MCF 10A (cell line): ENCODE measurements at regions of chr2 and their contacts with region 1.

Region 1: DNA sequence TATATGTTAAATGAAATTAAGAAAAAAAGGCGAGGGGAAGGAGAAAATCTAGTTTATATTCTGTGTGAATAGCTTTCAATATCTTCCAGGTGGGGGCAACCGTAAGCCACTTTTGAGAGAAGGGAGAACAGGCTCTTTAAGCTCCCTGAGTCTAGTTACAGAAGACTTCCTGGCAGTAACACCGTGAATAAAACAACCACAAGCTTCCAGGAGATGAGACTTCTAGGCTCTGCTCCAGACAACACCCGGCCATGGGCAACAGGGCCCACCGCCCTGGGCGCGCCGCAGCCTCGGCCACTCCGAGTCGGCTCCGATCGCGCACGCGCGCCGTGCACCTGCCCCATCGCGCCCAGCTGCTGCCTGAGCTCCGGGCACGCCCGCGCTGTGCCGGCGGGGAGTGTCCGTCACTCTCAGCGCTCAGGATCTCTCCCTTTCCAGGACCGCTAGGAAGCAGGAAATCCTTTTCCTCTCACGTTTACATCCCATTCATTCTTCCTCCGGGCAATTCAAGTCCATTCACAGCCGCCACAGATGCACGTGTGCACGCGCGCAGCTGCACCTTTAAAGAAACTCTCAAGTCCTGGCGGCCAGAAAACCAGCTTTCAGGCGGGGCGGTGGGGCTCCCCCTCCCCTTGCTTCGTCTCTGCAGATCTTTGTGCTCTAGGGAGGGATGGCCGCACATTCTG is 19.4 kb upstream of the PAX3 start:
- DNase-seq: peak; percentile 84
- H3K4me3 Mint-ChIP-seq: peak overlapping the region; percentile 89
- H3K27ac Mint-ChIP-seq: peak overlapping the region; percentile 89
- H3K4me1 Mint-ChIP-seq: no peaks in the 10 kb centered on the region
- H3K27me3 Mint-ChIP-seq: peaks cover 19% of the 10 kb centered on the region
- CTCF ChIP-seq: peak; percentile 63

Region 2: DNA sequence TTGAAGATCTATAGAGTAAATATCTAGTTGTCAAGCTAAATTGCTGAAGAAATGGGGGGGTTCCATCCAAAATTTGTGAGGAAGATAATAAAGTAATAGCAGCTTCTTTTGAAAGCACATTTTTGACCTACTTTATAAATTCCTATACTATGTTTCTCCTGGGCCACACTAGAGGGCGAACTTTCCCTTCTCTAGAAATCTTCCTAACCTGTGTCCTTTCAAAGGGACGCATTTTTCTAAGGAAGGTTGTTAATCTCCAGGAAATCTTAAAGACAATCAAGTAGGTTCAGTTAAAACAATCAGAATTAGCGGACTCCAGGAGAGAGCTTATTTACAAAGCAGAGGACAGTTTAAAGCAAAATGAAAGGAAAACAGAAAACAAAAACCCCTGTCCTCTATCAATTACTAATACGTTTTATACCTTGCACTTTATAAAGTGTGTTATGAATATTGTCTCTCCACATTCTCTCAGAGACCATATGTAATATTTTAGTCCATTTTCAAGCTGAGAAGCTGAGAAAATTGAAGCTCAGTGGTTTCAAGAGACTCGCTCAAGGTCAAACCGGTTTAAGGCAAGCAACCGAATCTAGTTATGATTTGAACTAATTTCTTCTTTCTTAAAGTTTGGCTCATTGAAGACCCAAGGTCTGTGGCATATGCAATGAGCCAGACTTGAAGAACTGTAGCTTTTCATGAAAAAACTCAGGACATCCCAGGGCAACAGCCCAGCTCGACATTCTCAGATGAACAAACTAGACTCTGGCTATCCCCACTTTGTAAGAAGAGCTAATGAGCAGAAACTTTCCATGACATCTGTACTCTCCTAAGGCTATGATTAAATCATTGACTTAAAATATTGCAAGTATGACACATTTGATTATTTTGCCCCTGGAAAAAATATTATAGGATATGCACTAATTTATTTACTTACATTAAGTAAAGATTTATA is 293.0 kb before region 1 on chr2:
- CTCF ChIA-PET with region 1: interaction called, 15 read pairs
- POLR2A ChIA-PET with region 1: interaction called, 7 read pairs
- intact Hi-C with region 1: loop called (anchors 1 kb)
- DNase-seq: peak; percentile 66
- H3K4me3 Mint-ChIP-seq: no peak overlapping the region
- H3K27ac Mint-ChIP-seq: no peak overlapping the region
- H3K4me1 Mint-ChIP-seq: no peaks in the 10 kb centered on the region
- H3K27me3 Mint-ChIP-seq: peaks cover 9% of the 10 kb centered on the region
- CTCF ChIP-seq: peak; percentile 69

Region 3: DNA sequence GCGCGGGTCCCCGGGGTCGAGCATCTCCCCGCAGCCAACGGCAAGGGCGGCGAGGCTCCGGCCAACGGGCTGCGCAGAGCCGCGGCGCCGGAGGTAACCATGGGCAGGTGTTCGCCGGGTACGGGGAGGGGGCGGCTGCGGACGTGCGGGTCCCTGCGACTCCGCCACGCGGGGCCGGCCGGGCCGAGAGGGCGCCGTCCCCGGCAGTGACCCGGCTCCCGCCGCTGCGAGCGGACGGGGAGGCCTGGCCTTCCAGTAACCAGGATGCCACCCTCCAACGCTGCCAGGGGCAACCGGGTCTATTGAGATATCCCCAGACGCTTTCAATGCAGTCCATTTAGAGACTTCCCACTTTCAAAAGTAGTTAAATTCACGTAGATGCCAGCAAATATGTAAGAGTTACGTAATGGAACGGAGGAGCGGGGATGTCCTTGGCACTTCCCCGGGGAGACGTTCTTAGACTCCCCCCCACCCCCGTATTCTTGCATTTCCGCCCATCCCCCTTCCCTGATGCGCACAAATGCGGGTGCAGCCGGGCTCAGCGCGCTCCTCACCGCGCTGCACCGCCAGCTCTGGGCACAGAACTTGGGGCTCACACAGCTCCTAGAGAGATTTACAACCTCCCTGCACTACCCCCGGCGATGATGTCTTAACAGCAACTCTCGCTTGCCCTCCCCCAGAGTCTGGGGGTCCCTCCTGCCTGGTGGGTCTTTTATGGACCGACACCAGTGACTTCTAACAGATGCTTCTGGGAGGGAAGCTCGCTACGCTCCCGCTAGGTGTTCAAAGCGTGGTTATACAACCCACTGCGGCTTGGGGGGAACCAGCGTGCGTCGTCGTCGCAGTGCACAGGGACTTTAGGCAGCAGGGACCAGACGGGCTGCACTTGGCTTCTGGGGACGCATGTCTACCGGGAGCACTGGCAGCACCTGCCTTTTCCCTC is 106.8 kb after region 1 on chr2:
- CTCF ChIA-PET with region 1: interaction called, 3 read pairs
- POLR2A ChIA-PET with region 1: interaction called, 13 read pairs
- intact Hi-C with region 1: loop called (anchors 1 kb)
- DNase-seq: peak; percentile 21
- H3K4me3 Mint-ChIP-seq: peak overlapping the region; percentile 82
- H3K27ac Mint-ChIP-seq: no peak overlapping the region
- H3K4me1 Mint-ChIP-seq: peaks cover 33% of the 10 kb centered on the region
- H3K27me3 Mint-ChIP-seq: no peaks in the 10 kb centered on the region
- CTCF ChIP-seq: no peak

Region 4: GRCh38 chr2:222440673-222441422 is 122.7 kb after region 1 on chr2:
- CTCF ChIA-PET with region 1: no interaction called
- POLR2A ChIA-PET with region 1: no interaction called
- intact Hi-C with region 1: no loop called
- DNase-seq: peak; percentile 71
- H3K4me3 Mint-ChIP-seq: peak overlapping the region; percentile 15
- H3K27ac Mint-ChIP-seq: peak overlapping the region; percentile 75
- H3K4me1 Mint-ChIP-seq: peaks cover 44% of the 10 kb centered on the region
- H3K27me3 Mint-ChIP-seq: no peaks in the 10 kb centered on the region
- CTCF ChIP-seq: no peak

Region 5: DNA sequence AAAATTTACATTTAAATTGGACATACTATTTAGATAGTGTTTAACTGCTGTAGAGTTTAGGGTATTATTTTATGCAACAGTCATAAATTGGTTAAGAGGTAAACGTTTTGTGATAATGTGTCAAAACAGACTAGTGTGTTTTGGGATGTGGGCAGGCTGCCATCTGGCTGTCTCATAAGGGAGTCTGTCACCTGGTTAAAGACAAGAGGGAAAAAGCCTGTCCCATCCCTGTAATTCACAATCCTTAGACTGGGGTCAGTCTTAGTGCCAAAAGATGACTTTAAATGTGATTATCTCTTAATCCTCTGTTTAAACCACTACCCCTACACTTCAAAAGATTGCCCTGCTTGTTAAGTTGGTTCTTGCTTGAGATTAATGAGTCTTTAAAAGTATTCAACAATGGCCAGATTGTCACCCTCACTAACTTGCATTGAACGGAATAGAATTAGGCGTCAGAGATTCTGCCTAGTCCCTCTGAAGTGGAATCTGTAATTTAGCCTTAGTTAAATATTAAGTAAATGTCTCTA is 165.4 kb after region 1 on chr2:
- CTCF ChIA-PET with region 1: interaction called, 12 read pairs
- POLR2A ChIA-PET with region 1: interaction called, 3 read pairs
- intact Hi-C with region 1: loop called (anchors 1 kb)
- DNase-seq: peak; percentile 35
- H3K4me3 Mint-ChIP-seq: no peak overlapping the region
- H3K27ac Mint-ChIP-seq: no peak overlapping the region
- H3K4me1 Mint-ChIP-seq: peaks cover 22% of the 10 kb centered on the region
- H3K27me3 Mint-ChIP-seq: no peaks in the 10 kb centered on the region
- CTCF ChIP-seq: no peak

Region 6: GRCh38 chr2:222554517-222554916 is 236.3 kb after region 1 on chr2:
- CTCF ChIA-PET with region 1: interaction called, 11 read pairs
- POLR2A ChIA-PET with region 1: interaction called, 3 read pairs
- intact Hi-C with region 1: no loop called
- DNase-seq: no peak
- H3K4me3 Mint-ChIP-seq: no peak overlapping the region
- H3K27ac Mint-ChIP-seq: no peak overlapping the region
- H3K4me1 Mint-ChIP-seq: peaks cover 4% of the 10 kb centered on the region
- H3K27me3 Mint-ChIP-seq: no peaks in the 10 kb centered on the region
- CTCF ChIP-seq: no peak

Region 7: GRCh38 chr2:222568865-222569264 is 250.7 kb after region 1 on chr2:
- CTCF ChIA-PET with region 1: interaction called, 33 read pairs
- POLR2A ChIA-PET with region 1: interaction called, 11 read pairs
- intact Hi-C with region 1: no loop called
- DNase-seq: peak; percentile 70
- H3K4me3 Mint-ChIP-seq: no peak overlapping the region
- H3K27ac Mint-ChIP-seq: no peak overlapping the region
- H3K4me1 Mint-ChIP-seq: peaks cover 19% of the 10 kb centered on the region
- H3K27me3 Mint-ChIP-seq: no peaks in the 10 kb centered on the region
- CTCF ChIP-seq: no peak

Region 8: GRCh38 chr2:222613715-222614331 is 295.7 kb after region 1 on chr2:
- CTCF ChIA-PET with region 1: interaction called, 16 read pairs
- POLR2A ChIA-PET with region 1: interaction called, 4 read pairs
- intact Hi-C with region 1: loop called (anchors 1 kb)
- DNase-seq: peak; percentile 59
- H3K4me3 Mint-ChIP-seq: no peak overlapping the region
- H3K27ac Mint-ChIP-seq: no peak overlapping the region
- H3K4me1 Mint-ChIP-seq: no peaks in the 10 kb centered on the region
- H3K27me3 Mint-ChIP-seq: no peaks in the 10 kb centered on the region
- CTCF ChIP-seq: peak; percentile 69